ENCODE measurements at regions of chr1 and their contacts with region 1.

Region 1: GRCh38 chr1:19010995-19011844 is 54.7 kb upstream of the IFFO2 start:
- DNase-seq: peak; percentile 93
- H3K4me3 Mint-ChIP-seq: peak overlapping the region; percentile 31
- H3K27ac Mint-ChIP-seq: peak overlapping the region; percentile 91
- H3K4me1 Mint-ChIP-seq: peaks cover 38% of the 10 kb centered on the region
- H3K27me3 Mint-ChIP-seq: no peaks in the 10 kb centered on the region

Region 2: GRCh38 chr1:18299441-18300338 is 711.5 kb before region 1 on chr1:
- CTCF ChIA-PET with region 1: no interaction called
- POLR2A ChIA-PET with region 1: no interaction called
- intact Hi-C with region 1: no loop called
- DNase-seq: peak; percentile 15
- H3K4me3 Mint-ChIP-seq: no peak overlapping the region
- H3K27ac Mint-ChIP-seq: no peak overlapping the region
- H3K4me1 Mint-ChIP-seq: no peaks in the 10 kb centered on the region
- H3K27me3 Mint-ChIP-seq: peaks cover 34% of the 10 kb centered on the region

Region 3: GRCh38 chr1:18949686-18950400 is 61.4 kb before region 1 on chr1:
- CTCF ChIA-PET with region 1: interaction called, 3 read pairs
- POLR2A ChIA-PET with region 1: interaction called, 8 read pairs
- intact Hi-C with region 1: loop called (anchors 1 kb)
- DNase-seq: peak; percentile 49
- H3K4me3 Mint-ChIP-seq: peak overlapping the region; percentile 80
- H3K27ac Mint-ChIP-seq: peak overlapping the region; percentile 98
- H3K4me1 Mint-ChIP-seq: peaks cover 90% of the 10 kb centered on the region
- H3K27me3 Mint-ChIP-seq: no peaks in the 10 kb centered on the region

Region 4: DNA sequence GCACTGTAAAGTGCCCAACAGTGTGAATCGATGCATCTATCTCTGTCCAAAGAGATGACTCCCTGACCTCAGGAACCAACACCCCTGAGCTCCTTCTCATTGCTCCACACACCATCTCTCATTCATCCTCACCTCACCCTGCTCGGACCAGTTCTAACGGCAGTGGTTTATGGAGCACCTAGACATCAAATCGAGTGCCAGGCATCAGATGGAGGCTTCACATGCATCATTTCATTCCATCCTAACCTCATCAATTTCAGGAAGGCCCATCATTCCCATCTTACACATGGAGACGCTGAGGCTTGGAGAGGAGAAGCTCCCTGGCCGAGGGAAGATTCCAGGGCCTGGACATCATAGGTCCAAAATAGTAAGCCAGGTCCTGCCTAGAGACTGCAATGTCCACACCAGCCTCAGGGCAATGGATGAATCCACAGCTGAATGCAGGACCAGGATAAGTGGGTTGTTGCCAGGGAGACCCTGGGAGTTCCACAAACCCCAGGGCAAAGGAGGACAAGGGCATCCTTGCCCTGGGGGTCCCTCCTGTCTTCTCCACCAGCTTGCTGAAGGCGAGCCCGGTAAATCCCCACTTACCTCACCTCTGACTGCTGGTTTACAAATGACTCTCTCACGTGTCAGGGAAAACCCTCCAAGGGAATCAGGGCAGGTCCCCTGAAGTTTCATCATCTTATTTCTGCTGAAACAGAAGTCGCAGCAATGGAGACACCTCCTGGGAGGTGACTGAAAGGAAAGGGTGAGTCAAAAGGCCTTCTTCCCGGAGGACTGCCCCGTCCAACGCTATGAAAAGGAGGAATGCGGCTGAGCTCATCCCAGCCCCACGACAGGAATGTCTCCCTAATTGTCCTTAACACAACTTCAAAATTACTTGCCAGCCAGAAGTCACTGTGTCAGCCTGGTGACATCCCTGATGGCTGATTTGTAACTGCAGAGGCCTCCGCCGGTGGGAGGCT is 45.7 kb before region 1 on chr1:
- CTCF ChIA-PET with region 1: no interaction called
- POLR2A ChIA-PET with region 1: no interaction called
- intact Hi-C with region 1: loop called (anchors 2 kb)
- DNase-seq: peak; percentile 78
- H3K4me3 Mint-ChIP-seq: no peak overlapping the region
- H3K27ac Mint-ChIP-seq: peak overlapping the region; percentile 70
- H3K4me1 Mint-ChIP-seq: peaks cover 14% of the 10 kb centered on the region
- H3K27me3 Mint-ChIP-seq: peaks cover 3% of the 10 kb centered on the region

Region 5: GRCh38 chr1:18989176-18989809 is 21.9 kb before region 1 on chr1:
- CTCF ChIA-PET with region 1: no interaction called
- POLR2A ChIA-PET with region 1: no interaction called
- intact Hi-C with region 1: no loop called
- DNase-seq: no peak
- H3K4me3 Mint-ChIP-seq: no peak overlapping the region
- H3K27ac Mint-ChIP-seq: no peak overlapping the region
- H3K4me1 Mint-ChIP-seq: peaks cover 5% of the 10 kb centered on the region
- H3K27me3 Mint-ChIP-seq: no peaks in the 10 kb centered on the region

Region 6: GRCh38 chr1:18999359-18999758 is 11.9 kb before region 1 on chr1:
- CTCF ChIA-PET with region 1: interaction called, 5 read pairs
- POLR2A ChIA-PET with region 1: interaction called, 4 read pairs
- intact Hi-C with region 1: loop called (anchors 1 kb)
- DNase-seq: no peak
- H3K4me3 Mint-ChIP-seq: no peak overlapping the region
- H3K27ac Mint-ChIP-seq: no peak overlapping the region
- H3K4me1 Mint-ChIP-seq: peaks cover 36% of the 10 kb centered on the region
- H3K27me3 Mint-ChIP-seq: peaks cover 6% of the 10 kb centered on the region

Region 7: GRCh38 chr1:19033861-19034680 is 22.9 kb after region 1 on chr1:
- CTCF ChIA-PET with region 1: no interaction called
- POLR2A ChIA-PET with region 1: no interaction called
- intact Hi-C with region 1: no loop called
- DNase-seq: no peak
- H3K4me3 Mint-ChIP-seq: no peak overlapping the region
- H3K27ac Mint-ChIP-seq: no peak overlapping the region
- H3K4me1 Mint-ChIP-seq: no peaks in the 10 kb centered on the region
- H3K27me3 Mint-ChIP-seq: no peaks in the 10 kb centered on the region

Region 8: GRCh38 chr1:19074902-19075721 is 63.9 kb after region 1 on chr1:
- CTCF ChIA-PET with region 1: interaction called, 3 read pairs
- POLR2A ChIA-PET with region 1: no interaction called
- intact Hi-C with region 1: loop called (anchors 2 kb)
- DNase-seq: no peak
- H3K4me3 Mint-ChIP-seq: no peak overlapping the region
- H3K27ac Mint-ChIP-seq: peak overlapping the region; percentile 81
- H3K4me1 Mint-ChIP-seq: peaks cover 55% of the 10 kb centered on the region
- H3K27me3 Mint-ChIP-seq: no peaks in the 10 kb centered on the region